Activated T-helper 1 cell treated with anti-CD3 and anti-CD28 coated beads, Interleukin-12 subunit alpha, Interleukin-12 subunit beta, Interleukin-2, Interleukin-4 antibody, amounts not matched to agents 30 ng/mL and 10 ng/mL and 1 ng/mL, durations not matched to agents 14 hours and 24 hours and 36 hours (primary cell): ENCODE measurements at regions of chr18 and their contacts with region 1.

Region 1: DNA sequence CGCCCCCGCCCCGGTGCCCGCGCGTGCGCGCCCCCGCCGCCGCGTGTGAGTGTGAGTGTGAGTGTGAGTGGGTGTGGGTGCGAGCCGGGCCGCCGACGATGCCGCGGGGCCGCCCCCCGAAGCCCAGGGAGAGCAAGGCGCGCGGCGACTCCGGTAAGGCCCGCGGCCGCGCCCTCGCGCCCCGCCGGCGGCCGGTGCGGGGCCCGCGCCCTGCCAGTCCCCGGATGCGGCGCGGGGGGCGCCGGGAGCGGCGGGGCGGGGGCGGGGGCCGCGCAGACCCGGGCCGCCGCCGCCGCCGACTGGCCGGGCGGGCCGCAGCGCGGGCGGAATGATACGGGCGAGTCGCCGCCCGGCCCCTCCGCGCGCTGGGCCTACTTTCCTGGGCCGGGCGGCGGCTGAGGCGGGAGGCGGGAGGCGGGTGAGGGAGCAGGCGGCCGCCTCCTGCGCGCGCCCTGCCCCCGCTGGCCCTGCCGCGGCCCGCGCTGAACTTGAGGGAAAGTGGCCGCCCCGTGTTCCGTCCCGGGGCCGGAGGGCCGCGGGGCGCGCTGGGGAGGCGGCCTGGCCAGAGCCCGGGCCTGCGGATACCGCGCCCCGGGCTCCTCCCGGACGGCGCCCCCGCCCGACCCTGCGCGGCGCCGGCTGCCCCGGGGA is at the start of gene ZNF236:
- DNase-seq: peak; percentile 59
- H3K4me3 Mint-ChIP-seq: peak within 1 kb of the TSS; percentile 93
- H3K27ac Mint-ChIP-seq: peak within 1 kb of the TSS; percentile 96
- H3K4me1 Mint-ChIP-seq: peaks cover 41% of the 10 kb centered on the region
- H3K27me3 Mint-ChIP-seq: no peaks in the 10 kb centered on the region
- total RNA-seq, gene ZNF236: 18.0 and 21.5 TPM in 2 replicates

Region 2: GRCh38 chr18:76620321-76621170 is 202.1 kb before region 1 on chr18:
- intact Hi-C with region 1: no loop called
- DNase-seq: no peak
- H3K4me3 Mint-ChIP-seq: no peak overlapping the region
- H3K27ac Mint-ChIP-seq: no peak overlapping the region
- H3K4me1 Mint-ChIP-seq: peaks cover 12% of the 10 kb centered on the region
- H3K27me3 Mint-ChIP-seq: peaks cover 23% of the 10 kb centered on the region

Region 3: DNA sequence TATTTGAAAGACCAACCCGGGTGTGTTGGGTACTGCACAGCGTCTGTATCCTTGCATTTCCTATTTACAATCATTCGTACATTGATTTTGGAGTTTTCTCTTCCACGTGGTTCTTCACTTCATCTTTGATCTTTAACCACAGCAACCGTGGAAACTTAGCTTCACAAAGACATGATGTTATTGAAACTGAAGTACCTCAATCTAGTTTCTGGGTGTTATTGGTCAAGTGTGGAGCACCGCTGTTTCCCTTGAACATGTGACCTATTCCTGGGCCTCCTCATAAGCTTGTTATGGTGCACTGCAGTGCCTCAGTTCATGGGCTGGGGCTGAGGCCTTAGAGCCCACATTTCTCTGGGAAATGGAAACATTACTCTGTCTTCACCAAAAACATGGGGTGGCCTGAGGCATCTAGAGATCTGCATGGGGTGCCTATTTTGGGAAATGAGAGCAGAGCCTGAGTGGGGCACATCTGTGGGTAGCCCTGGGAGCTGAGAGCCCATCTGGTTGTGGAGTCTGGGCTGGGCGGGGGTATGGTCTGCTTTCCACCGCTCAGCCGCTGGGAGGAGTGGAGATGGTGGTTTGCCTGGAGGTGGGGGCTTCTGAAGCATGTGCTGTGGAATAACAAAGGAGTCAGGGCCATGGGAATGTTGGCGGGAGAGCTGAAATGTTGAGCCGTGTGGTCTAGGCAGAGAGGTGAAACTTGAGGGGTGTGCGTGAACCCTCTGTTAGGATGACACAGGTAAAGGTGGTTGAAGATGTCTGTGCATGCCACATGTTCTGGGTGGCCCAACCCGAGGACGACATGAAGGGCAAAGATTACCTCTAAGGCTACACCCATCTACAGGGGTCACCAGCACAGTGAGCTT is 37.1 kb after region 1 on chr18:
- intact Hi-C with region 1: loop called (anchors 1 kb)
- DNase-seq: peak; percentile 35
- H3K4me3 Mint-ChIP-seq: peak overlapping the region; percentile 51
- H3K27ac Mint-ChIP-seq: peak overlapping the region; percentile 89
- H3K4me1 Mint-ChIP-seq: peaks cover 27% of the 10 kb centered on the region
- H3K27me3 Mint-ChIP-seq: no peaks in the 10 kb centered on the region

Region 4: DNA sequence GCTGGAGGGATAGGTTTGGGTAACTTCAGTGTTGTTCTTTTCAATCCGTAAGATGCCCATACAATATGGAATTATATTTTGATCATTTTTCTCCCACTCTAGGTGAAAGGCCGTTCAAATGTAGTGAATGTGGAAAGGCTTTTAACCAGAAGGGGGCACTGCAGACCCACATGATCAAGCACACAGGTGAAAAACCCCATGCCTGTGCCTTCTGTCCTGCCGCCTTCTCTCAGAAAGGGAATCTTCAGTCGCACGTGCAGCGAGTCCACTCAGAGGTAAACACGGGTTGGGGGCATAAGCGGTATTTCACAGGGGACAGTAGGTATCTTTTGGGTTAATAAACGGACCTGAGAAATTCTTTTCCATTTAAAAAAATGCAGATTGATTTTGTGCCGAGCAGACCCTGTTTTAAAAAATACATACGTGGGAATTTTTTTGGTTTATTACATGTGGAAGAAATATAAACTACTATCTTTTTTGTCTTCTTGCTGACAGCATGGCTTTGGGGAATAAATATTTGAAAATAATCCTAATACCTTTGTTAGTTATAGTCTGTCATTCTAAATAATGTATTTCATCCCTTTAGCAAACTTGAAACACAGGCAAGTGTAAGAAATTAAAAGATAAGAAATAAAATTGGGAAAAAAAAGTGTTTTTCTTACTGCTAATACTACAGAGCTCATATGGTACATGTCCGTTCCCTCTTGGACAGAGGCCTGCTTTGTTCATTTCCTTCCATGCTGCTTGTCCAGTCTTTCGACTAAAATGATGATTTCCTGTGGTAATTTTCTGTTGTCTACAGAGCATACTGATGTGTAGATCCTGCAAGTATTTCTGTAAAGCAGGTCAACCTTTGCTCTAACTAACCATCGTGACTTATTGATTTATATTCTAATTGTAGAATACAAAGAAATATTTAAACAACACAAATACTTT is 53.0 kb after region 1 on chr18:
- intact Hi-C with region 1: loop called (anchors 1 kb)
- DNase-seq: peak; percentile 14
- H3K4me3 Mint-ChIP-seq: no peak overlapping the region
- H3K27ac Mint-ChIP-seq: peak overlapping the region; percentile 59
- H3K4me1 Mint-ChIP-seq: peaks cover 17% of the 10 kb centered on the region
- H3K27me3 Mint-ChIP-seq: no peaks in the 10 kb centered on the region

Region 5: GRCh38 chr18:76982841-76983587 is 160.4 kb after region 1 on chr18:
- intact Hi-C with region 1: loop called (anchors 5 kb)
- DNase-seq: peak; percentile 77
- H3K4me3 Mint-ChIP-seq: no peak overlapping the region
- H3K27ac Mint-ChIP-seq: no peak overlapping the region
- H3K4me1 Mint-ChIP-seq: peaks cover 10% of the 10 kb centered on the region
- H3K27me3 Mint-ChIP-seq: peaks cover 2% of the 10 kb centered on the region

Region 6: DNA sequence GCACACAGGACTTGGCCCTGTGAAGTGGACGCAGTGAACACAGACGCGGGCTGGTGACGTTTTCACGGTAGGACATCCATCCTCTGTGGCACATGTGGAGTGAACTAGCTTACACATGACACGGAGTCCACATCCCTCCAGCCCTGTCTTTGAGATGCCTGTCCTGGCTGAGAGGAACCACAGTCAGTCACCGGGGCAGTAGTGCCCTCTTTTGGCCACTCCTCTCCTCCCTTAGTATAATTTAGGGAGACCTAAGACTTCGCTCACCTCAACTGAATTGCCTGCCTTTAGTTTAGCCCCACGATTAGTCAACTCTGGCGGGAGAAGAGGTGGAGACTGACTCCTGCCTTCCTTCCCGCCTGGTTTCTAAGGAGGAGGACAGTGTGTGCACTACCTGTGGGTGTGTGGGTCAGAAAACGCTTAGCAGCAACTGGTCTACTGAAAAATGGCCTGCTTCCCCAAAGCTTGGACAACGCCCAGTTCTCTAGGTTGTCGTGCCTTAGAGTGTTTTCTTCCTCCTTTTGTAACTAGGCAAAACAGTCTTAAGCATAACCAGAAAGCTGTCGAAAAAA is 239.4 kb after region 1 on chr18:
- intact Hi-C with region 1: loop called (anchors 5 kb)
- DNase-seq: peak; percentile 37
- H3K4me3 Mint-ChIP-seq: peak overlapping the region; percentile 76
- H3K27ac Mint-ChIP-seq: peak overlapping the region; percentile 97
- H3K4me1 Mint-ChIP-seq: peaks cover 85% of the 10 kb centered on the region
- H3K27me3 Mint-ChIP-seq: no peaks in the 10 kb centered on the region

Region 7: DNA sequence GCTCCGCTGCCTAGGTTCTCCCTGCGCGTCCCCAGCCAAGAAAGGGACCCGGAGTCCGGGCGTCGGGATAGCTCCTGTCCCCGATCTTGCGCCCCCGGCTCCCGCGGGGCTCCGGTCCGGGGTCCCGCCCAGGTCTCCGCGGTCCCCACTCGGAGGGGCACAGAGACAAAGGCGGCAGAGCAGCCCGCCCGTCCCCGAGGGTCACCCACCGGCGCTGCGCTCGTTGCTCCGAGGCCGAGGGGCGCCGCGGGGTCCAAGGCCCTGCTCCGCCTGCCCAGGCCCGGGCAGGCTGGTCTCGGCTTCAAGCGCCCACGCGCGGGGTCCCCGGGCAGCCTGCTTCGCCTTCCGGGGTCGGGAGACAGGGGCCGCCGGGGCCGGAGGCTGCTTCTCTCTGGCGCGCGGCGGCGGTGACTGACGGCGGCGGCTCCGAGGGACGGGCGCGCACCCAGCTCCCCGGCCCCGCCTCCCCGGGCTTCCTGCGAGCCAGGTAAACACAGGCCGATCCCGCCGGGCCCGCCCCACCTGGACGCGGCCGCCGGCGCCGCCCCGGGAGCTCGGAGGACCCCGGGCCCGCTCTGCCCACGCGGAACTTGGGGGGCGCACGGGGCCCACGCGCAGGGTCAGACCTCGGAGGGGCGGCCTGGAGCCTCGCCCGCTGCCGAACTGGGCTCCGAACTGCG is 309.9 kb after region 1 on chr18 and contains the start of gene MBP:
- intact Hi-C with region 1: loop called (anchors 5 kb)
- DNase-seq: peak; percentile 65
- H3K4me3 Mint-ChIP-seq: peak within 1 kb of the TSS; percentile 100
- H3K27ac Mint-ChIP-seq: peak within 1 kb of the TSS; percentile 48
- H3K4me1 Mint-ChIP-seq: peaks cover 54% of the 10 kb centered on the region
- H3K27me3 Mint-ChIP-seq: no peaks in the 10 kb centered on the region
- total RNA-seq, gene MBP: 57.3 and 63.6 TPM in 2 replicates

Region 8: GRCh38 chr18:77207540-77207939 is 384.9 kb after region 1 on chr18:
- intact Hi-C with region 1: loop called (anchors 10 kb)
- DNase-seq: no peak
- H3K4me3 Mint-ChIP-seq: peak overlapping the region; percentile 28
- H3K27ac Mint-ChIP-seq: no peak overlapping the region
- H3K4me1 Mint-ChIP-seq: peaks cover 45% of the 10 kb centered on the region
- H3K27me3 Mint-ChIP-seq: no peaks in the 10 kb centered on the region